ENCODE measurements at regions of chr17 and their contacts with region 1.

Region 1: GRCh38 chr17:48791128-48792032 is 25.6 kb downstream of the TTLL6 start:
- DNase-seq: peak; percentile 94
- H3K4me3 ChIP-seq: no peak overlapping the region
- H3K27ac ChIP-seq: no peak overlapping the region
- H3K4me1 ChIP-seq: peaks cover 9% of the 10 kb centered on the region
- H3K27me3 ChIP-seq: no peaks in the 10 kb centered on the region
- CTCF ChIP-seq: peak; percentile 95

Region 2: DNA sequence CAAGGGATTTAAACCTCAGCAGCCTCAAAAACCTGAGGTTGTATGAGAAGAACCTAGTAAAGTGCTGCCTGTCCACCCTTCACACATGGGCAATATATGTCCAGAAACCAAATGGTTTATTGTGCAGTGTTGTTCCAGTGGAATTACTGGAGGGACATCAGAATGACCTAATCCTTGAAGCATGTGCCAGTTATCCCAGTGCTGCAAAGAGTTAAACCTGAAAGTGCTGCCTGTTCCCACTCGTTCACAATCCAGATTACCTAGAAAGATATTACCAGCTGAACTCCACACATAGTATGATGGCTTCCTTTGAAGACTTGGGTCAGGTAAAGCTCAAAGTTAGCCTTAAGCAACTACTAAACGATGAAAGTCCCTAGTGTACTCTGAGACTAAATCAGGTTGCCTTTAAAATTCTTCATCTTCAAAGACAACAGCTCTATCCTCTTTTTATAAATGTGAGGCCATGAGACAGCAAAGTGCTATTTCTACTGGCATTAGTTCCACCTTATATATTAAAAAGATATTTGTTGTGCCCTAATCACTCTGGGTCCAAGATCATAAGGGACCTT is 550.7 kb before region 1 on chr17:
- CTCF ChIA-PET with region 1: interaction called, 10 read pairs
- POLR2A ChIA-PET with region 1: no interaction called
- intact Hi-C with region 1: no loop called
- DNase-seq: no peak
- H3K4me3 ChIP-seq: no peak overlapping the region
- H3K27ac ChIP-seq: peak overlapping the region; percentile 87
- H3K4me1 ChIP-seq: peaks cover 84% of the 10 kb centered on the region
- H3K27me3 ChIP-seq: no peaks in the 10 kb centered on the region
- CTCF ChIP-seq: no peak

Measured in A673 (cell line).